Heart left ventricle (tissue), 16 donors: ENCODE measurements at regions of chr13 and their contacts with region 1.

Region 1: GRCh38 chr13:77779552-77780272 is 82.2 kb downstream of the SLAIN1 start:
- DNase-seq: peak in 2 of 5 donors; percentile 31 to 34
- ATAC-seq: peak in 3 of 4 donors; percentile 70 to 75 (median 71)
- H3K4me3 ChIP-seq: no peak overlapping the region
- H3K27ac ChIP-seq: peak overlapping the region in 1 of 12 donors; percentile 65
- H3K4me1 ChIP-seq: peaks cover 0 to 9% (median 0%) of the 10 kb centered on the region in 12 donors
- H3K27me3 ChIP-seq: no peaks in the 10 kb centered on the region
- CTCF ChIP-seq: peak; percentile 58 to 89 (median 74)
- POLR2A ChIP-seq: no peak

Region 2: GRCh38 chr13:77692746-77693448 is 86.8 kb before region 1 on chr13:
- intact Hi-C with region 1: no loop called
- DNase-seq: no peak
- ATAC-seq: no peak
- H3K4me3 ChIP-seq: no peak overlapping the region
- H3K27ac ChIP-seq: no peak overlapping the region
- H3K4me1 ChIP-seq: peaks cover 0 to 13% (median 0%) of the 10 kb centered on the region in 12 donors
- H3K27me3 ChIP-seq: peaks cover 0 to 3% (median 0%) of the 10 kb centered on the region in 9 donors
- CTCF ChIP-seq: no peak
- POLR2A ChIP-seq: no peak

Region 3: DNA sequence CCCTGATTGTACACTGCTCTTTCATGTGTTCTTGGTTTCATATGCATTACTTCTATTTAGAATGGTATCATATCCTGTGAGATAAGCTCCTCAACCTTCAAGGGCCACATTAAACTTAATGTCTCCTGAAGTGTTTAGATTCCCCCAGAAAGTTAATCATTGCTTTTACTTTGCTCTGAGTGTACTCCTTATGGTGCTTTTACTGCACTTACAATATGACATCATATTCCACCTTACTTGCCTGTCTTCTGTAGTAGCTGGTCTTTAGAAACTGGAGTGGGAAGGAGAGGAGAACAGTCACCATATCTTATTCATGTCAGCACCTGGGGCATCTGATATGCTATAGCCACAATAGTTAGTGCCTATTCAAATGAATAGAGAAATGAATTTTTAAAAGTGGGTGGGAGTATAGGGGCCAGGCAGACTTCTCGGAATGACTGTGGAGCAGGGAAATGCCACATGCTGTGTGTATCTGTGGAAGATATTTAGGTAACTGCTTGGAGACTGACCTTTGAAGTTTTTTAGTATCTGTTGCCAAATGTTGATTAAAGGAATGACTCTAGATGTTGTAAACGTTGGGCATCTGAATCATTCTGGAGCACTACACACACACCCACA is 42.0 kb before region 1 on chr13:
- intact Hi-C with region 1: no loop called
- DNase-seq: no peak
- ATAC-seq: no peak
- H3K4me3 ChIP-seq: no peak overlapping the region
- H3K27ac ChIP-seq: no peak overlapping the region
- H3K4me1 ChIP-seq: no peaks in the 10 kb centered on the region
- H3K27me3 ChIP-seq: no peaks in the 10 kb centered on the region
- CTCF ChIP-seq: no peak
- POLR2A ChIP-seq: no peak

Region 4: DNA sequence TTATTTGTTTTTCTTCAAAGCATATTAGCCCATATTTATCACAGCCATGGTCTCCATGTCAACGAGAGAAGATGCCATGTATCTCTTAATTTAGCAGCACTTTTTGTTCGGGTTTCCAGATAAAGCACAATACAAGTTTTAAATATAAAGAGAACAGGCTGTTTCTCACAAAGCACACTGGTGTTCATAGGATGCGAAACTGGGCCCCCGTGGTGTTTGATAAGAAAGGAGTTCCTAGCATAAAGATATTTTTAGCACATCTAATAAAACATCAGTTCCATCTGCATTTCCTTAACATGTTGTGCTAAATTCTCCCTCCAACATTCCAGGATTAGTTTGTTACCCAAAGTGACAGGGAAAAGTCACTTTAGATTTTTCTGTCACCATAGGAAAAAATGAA is 211.3 kb after region 1 on chr13:
- intact Hi-C with region 1: loop called in 1 of 10 experiments (anchors 2 kb)
- DNase-seq: peak in 3 of 5 donors; percentile 30 to 34 (median 34)
- ATAC-seq: peak; percentile 36 to 67 (median 48)
- H3K4me3 ChIP-seq: no peak overlapping the region
- H3K27ac ChIP-seq: peak overlapping the region in 4 of 12 donors; percentile 4 to 54 (median 38)
- H3K4me1 ChIP-seq: peaks cover 0 to 35% (median 10%) of the 10 kb centered on the region in 12 donors
- H3K27me3 ChIP-seq: no peaks in the 10 kb centered on the region
- CTCF ChIP-seq: no peak
- POLR2A ChIP-seq: no peak

Region 5: GRCh38 chr13:78121459-78122348 is 342.0 kb after region 1 on chr13:
- intact Hi-C with region 1: loop called (anchors 1 to 2 kb)
- DNase-seq: peak in 3 of 5 donors; percentile 30 to 43 (median 42)
- ATAC-seq: peak in 2 of 4 donors; percentile 47 to 65
- H3K4me3 ChIP-seq: peak overlapping the region in 2 of 12 donors; percentile 19 to 21
- H3K27ac ChIP-seq: no peak overlapping the region
- H3K4me1 ChIP-seq: peaks cover 0 to 8% (median 0%) of the 10 kb centered on the region in 12 donors
- H3K27me3 ChIP-seq: peaks cover 0 to 3% (median 0%) of the 10 kb centered on the region in 9 donors
- CTCF ChIP-seq: peak; percentile 82 to 96 (median 90)
- POLR2A ChIP-seq: no peak